ENCODE measurements at regions of chr13 and their contacts with region 1.

Region 1: DNA sequence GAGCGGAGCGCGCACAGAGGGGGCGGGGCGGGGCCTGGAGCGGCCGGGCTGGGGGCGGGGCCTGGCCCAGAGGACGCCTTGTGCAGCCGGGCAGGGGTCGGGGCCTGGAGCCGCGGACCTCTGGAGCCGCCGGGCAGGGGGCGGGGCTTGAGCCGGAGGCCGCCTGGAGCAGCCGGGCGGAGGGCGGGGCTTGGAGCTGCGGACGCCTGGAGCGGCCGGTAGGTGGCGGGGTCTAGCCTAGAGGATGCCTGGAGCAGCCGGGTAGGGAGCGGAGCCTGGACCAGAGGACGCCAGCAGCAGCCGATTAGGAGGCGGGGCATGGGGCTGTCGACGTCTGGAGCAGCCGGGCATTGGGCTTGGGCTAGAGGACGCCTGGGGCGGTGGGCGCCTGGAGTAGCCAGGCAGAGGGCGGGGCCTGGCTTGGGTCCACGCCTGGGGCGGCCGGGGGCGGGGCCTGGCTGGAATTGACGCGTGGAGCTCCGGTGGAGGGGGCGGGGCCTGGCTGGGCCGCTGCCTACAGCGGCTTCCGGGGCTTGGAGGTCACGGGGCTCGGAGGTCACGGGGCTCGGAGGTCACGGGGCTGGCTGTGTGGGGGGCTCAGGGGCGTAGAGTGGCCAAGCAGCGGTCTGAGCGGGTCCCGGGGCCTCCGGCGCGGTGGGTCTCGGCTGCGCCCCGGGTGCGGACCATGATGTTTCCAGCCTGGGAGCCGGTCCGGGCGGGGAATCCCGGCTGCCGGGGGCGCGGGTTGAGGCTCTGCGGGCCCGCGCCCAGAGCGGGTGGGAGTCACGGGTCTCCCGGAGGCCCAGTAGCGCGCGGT is at the start of gene ANKRD10:
- DNase-seq: peak; percentile 97 to 99
- H3K4me3 ChIP-seq: peak within 1 kb of the TSS; percentile 77 to 89
- H3K27ac ChIP-seq: peak within 1 kb of the TSS; percentile 97
- H3K4me1 ChIP-seq: peaks cover 48% of the 10 kb centered on the region
- H3K27me3 ChIP-seq: no peaks in the 10 kb centered on the region
- CTCF ChIP-seq: peak; percentile 74 to 92 (median 92)
- POLR2A ChIP-seq: no peak
- total RNA-seq, gene ANKRD10: 114 TPM

Region 2: GRCh38 chr13:110705826-110706569 is 209.3 kb before region 1 on chr13 and contains the start of gene CARS2:
- intact Hi-C with region 1: loop called (anchors 5 kb)
- DNase-seq: peak in 1 of 2 donors; percentile 97
- H3K4me3 ChIP-seq: peak within 1 kb of the TSS; percentile 72 to 95
- H3K27ac ChIP-seq: peak within 1 kb of the TSS; percentile 65
- H3K4me1 ChIP-seq: peaks cover 42% of the 10 kb centered on the region
- H3K27me3 ChIP-seq: no peaks in the 10 kb centered on the region
- CTCF ChIP-seq: peak in 1 of 3 experiments; percentile 23
- POLR2A ChIP-seq: peak in 1 of 2 donors; percentile 79
- total RNA-seq, gene CARS2: 65.1 TPM

Region 3: DNA sequence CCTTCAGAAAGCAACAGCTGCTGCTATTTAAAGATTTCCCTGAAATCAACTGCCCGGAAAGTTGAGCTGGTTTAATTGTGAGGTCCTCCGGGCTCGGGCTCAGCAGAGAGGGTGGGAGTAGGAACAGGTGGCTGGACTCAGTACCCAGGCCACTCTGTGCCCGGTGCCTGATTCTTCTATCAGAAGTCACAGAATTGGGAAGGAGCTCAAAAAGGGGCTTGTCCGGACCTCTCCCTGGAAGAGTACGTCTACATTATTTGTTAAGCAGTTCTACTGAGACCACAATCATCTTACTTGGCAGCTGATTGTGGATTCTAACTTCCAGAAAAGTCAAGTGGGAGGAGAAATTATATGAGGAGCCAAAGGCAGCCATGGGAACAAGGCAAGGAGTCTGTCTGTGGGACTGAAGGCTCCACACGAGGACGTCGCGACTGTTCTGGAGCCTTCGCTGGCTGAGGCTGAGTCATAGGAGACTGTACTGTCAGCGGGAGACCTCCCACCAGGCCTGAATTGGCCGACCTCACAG is 91.3 kb after region 1 on chr13:
- intact Hi-C with region 1: loop called (anchors 2 kb)
- DNase-seq: no peak
- H3K4me3 ChIP-seq: peak overlapping the region in 1 of 2 donors; percentile 4
- H3K27ac ChIP-seq: peak overlapping the region; percentile 91
- H3K4me1 ChIP-seq: peaks cover 7% of the 10 kb centered on the region
- H3K27me3 ChIP-seq: no peaks in the 10 kb centered on the region
- CTCF ChIP-seq: no peak
- POLR2A ChIP-seq: no peak

Region 4: GRCh38 chr13:111046590-111047141 is 131.4 kb after region 1 on chr13:
- intact Hi-C with region 1: loop called (anchors 10 kb)
- DNase-seq: peak in 1 of 2 donors; percentile 74
- H3K4me3 ChIP-seq: no peak overlapping the region
- H3K27ac ChIP-seq: peak overlapping the region; percentile 64
- H3K4me1 ChIP-seq: peaks cover 11% of the 10 kb centered on the region
- H3K27me3 ChIP-seq: no peaks in the 10 kb centered on the region
- CTCF ChIP-seq: peak in 1 of 3 experiments; percentile 12
- POLR2A ChIP-seq: no peak

Region 5: DNA sequence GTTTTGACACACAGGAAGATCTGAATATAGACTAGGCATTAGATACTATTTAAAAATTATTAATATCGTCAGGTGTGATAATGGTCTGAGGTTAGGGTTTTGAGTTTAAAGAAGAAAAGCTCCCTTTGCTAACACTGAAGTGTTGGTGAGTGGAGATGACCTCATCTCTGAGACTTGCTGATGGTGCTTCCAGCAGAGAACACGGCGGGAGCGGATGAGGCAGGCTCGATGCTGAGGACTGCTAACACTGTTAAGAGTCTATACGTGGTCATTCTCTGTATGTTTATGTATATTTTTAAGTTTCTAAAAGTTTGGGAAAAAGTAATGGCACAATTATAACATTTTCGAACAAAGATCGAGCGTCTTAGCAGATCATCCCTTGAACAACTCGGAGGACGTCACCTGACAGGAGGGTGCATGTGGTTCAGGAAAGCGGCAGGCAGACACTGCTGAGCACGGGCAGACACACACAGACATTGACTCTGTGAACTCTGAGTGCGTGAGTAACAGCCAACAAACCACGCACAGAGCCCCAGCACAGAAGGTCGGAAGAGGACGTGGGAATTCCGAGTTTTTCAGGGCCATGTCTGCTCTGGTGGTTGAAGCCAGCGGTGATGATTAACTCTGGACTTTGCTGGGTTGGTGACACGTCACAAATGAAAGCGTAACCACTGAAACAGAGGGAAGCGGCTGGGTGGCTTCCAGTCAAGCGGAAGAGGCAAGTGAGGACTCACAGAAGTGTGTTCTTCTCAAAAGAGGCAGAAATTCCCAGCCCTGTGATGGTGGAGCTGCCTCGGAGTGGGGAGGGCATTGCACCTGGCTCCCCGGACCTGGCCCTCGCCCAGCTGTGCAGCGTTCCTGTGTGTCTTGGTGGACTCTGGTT is 313.2 kb after region 1 on chr13:
- intact Hi-C with region 1: loop called (anchors 10 kb)
- DNase-seq: no peak
- H3K4me3 ChIP-seq: no peak overlapping the region
- H3K27ac ChIP-seq: no peak overlapping the region
- H3K4me1 ChIP-seq: peaks cover 18% of the 10 kb centered on the region
- H3K27me3 ChIP-seq: no peaks in the 10 kb centered on the region
- CTCF ChIP-seq: no peak
- POLR2A ChIP-seq: no peak